Activated CD4-positive, alpha-beta memory T cell treated with anti-CD3 and anti-CD28 coated beads for 36 hours (primary cell): ENCODE measurements at regions of chr21 and their contacts with region 1.

Region 1: DNA sequence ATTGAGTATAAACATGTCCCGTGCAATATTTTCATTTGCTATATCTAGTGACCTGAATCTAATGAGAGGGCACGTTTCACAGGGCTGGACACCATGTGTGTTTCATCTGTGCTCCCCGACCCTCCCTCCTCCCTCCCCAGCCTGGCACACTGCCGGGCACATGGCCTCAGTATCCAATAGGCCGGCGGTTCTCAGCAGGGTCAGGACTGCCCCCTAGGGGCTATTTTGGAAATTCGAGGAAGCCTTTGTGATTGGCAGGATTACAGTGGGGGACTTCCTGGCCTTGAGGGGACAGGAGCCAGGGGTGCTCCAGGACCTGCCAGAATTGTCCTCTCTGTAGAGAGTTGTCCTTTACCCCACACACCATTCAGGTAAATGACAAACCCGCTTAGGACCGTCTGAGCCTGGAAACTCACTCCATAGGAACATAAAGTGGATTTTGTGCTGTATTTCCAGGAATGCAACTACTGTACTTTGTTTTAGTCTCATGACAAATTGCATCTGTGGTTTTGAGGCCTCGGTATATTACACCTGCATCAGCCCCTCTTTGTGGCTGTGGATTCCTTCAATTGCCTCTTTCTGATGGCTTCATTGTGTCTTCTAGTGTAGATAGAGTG is 109.5 kb upstream of the SIM2 start:
- DNase-seq: peak; percentile 48
- H3K4me3 Mint-ChIP-seq: no peak overlapping the region
- H3K27ac Mint-ChIP-seq: no peak overlapping the region
- H3K4me1 Mint-ChIP-seq: no peaks in the 10 kb centered on the region
- H3K27me3 Mint-ChIP-seq: peaks cover 1% of the 10 kb centered on the region

Region 2: DNA sequence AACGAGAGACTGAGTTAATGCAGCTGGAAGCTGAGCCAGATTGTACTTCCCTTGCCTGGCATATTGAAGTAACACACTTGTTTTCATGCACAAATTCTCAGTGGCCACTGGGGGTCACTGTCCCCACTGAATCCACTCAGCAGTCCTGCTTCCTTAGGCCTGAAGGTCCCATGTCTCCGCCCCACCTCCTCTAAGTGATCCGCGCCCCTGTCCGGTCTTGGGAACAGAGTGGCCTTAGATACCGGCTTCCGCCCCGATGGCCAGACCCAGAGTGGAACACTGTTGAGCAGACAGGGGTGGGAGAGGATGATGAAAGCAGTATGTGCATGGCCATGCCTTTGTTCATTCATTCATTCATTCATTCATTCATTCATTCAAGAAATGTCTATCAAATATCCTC is 169.5 kb before region 1 on chr21:
- CTCF ChIA-PET with region 1: interaction called, 4 read pairs
- POLR2A ChIA-PET with region 1: no interaction called
- intact Hi-C with region 1: loop called (anchors 1 kb)
- DNase-seq: peak; percentile 61
- H3K4me3 Mint-ChIP-seq: no peak overlapping the region
- H3K27ac Mint-ChIP-seq: no peak overlapping the region
- H3K4me1 Mint-ChIP-seq: no peaks in the 10 kb centered on the region
- H3K27me3 Mint-ChIP-seq: no peaks in the 10 kb centered on the region

Region 3: DNA sequence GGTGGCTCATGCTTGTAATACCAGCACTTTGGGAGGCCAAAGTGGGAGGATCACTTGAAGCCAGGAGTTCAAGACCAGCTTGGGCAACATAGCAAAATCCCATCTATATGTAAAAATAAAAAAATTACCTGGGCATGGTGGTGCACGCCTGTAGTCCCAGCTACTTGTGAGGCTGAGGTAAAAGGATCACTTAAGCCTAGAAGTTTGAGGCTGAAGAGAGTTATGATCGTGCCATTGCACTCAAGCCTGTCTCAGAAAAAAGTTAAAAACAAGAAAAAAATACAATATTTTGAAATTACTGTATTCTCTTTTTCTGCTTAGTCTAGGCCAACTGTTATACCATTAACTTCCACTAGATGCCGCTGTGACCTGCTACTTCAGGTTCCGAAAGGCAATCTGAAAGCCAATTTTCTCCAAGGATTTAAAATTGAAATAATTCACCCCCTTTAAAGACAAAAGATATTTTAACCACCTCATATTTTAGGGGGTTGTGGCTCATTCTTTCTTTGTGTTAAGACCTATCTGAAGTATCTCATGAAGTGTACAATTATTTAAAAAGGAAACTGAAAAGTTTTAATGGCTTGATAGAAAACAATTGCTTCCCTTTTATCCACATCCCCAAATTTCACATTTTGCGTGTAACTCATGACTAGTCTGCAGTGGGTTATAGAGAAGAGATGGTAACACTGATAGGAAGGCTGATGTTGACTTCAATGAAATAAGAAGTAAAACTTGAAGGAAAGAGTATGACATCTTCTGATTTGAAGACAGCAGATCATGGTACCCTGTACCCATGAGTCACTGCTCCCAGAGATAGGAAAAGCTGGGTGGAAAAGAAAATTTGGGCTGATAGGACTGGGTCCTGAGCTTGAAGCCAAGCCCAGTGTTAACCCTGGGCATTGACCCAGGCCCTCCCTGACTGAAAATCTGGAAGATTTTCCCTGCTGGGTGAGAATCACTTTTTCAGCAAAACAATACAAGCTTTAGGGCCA is 85.1 kb before region 1 on chr21:
- CTCF ChIA-PET with region 1: interaction called, 3 read pairs
- POLR2A ChIA-PET with region 1: no interaction called
- intact Hi-C with region 1: loop called (anchors 1 kb)
- DNase-seq: peak; percentile 33
- H3K4me3 Mint-ChIP-seq: no peak overlapping the region
- H3K27ac Mint-ChIP-seq: no peak overlapping the region
- H3K4me1 Mint-ChIP-seq: no peaks in the 10 kb centered on the region
- H3K27me3 Mint-ChIP-seq: peaks cover 7% of the 10 kb centered on the region

Region 4: DNA sequence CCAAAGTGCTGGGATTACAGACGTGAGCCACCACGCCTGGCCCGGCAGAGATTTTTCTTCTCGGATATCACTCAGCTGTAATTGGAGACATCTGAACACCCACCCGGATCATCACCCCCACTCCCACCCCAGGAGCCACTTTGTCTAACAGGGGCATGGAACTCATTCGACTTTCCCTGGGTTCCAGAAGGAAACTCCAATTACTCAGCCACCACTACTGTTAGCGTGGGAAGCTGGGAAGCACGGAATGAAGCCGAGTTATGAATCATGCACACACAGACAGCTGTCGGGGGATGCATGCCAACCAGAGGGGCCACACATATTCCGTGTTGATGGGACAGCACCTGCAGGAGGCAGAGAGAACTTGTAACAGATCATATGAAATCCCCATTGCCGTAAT is 291.8 kb after region 1 on chr21:
- CTCF ChIA-PET with region 1: no interaction called
- POLR2A ChIA-PET with region 1: no interaction called
- intact Hi-C with region 1: no loop called
- DNase-seq: no peak
- H3K4me3 Mint-ChIP-seq: no peak overlapping the region
- H3K27ac Mint-ChIP-seq: no peak overlapping the region
- H3K4me1 Mint-ChIP-seq: peaks cover 2% of the 10 kb centered on the region
- H3K27me3 Mint-ChIP-seq: no peaks in the 10 kb centered on the region